ENCODE measurements at regions of chr20 and their contacts with region 1.

Region 1: DNA sequence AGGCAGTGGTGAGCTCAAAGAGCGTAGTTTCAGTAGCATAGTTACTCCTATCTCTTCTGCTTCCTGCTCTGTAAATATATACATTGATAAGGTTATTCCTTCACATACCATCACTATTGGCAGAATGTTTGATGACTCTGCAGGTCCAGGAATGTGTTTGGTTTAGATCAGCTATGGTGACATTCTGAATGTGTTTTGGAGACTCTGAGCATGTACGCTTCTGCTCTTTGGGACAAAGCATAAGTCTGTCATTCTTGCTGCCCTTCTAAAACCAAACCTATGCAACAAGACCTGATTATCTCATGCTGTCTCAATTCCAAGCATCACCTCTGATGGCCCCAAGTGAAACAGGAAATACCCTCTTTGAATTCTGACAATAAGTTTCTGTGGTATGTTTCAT is 1074.3 kb downstream of the KIF16B start:
- DNase-seq: no peak
- H3K4me3 ChIP-seq: no peak overlapping the region
- H3K27ac ChIP-seq: no peak overlapping the region
- H3K4me1 ChIP-seq: no peaks in the 10 kb centered on the region
- H3K27me3 ChIP-seq: no peaks in the 10 kb centered on the region

Region 2: GRCh38 chr20:15716256-15716655 is 217.3 kb after region 1 on chr20:
- CTCF ChIA-PET with region 1: no interaction called
- POLR2A ChIA-PET with region 1: interaction called, 10 read pairs
- DNase-seq: no peak
- H3K4me3 ChIP-seq: no peak overlapping the region
- H3K27ac ChIP-seq: no peak overlapping the region
- H3K4me1 ChIP-seq: no peaks in the 10 kb centered on the region
- H3K27me3 ChIP-seq: peaks cover 0 to 9% (median 0%) of the 10 kb centered on the region in 5 experiments

Measured in common myeloid progenitor, CD34-positive (primary cell).